Activated T-helper 2 cell treated with anti-CD3 and anti-CD28 coated beads, Interferon-gamma antibody, Interleukin-2, Interleukin-4, amounts not matched to agents 10 μg/mL and 5 μg/mL and 100 μg/mL, durations not matched to agents 14 hours and 24 hours and 36 hours (primary cell): ENCODE measurements at regions of chr12 and their contacts with region 1.

Region 1: DNA sequence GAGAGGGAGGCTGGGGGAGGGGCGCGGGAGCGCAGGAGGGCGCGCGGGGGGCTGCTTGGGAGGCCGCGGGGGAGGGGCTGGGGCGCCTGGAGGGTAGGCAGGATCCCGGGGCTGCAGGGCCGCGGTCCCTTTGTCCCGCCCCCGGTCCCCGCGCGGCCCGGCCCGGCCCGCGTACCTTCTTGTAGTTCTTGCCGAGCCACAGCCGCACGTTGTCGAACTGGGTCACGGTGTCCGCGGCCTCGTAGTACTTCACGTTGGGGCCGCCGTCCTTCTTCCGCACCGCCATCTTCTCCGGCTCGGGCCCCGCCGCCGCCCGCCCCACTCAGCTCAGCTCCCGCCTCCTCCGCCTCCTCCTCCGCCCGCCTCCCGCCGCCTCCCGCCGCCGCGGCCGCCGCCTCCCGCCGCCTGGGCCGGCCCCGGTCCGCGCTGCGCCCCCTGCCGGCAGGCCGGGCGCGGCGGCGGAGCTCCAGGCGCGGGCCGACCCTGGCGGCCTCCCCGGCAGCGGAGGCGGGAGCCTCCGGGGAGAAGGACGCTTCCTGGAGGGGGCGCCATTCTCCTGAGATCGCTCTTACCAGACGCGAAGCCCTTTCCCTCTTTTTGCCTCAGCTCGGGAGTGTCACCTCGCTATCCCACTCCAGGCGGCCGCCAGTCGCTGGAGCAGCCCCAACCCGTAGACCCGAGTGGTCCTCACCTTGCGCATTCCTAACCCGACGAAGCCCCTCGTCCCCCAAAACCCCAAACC is at the start of gene SMARCC2:
- DNase-seq: peak; percentile 81
- H3K4me3 Mint-ChIP-seq: peak within 1 kb of the TSS; percentile 98
- H3K27ac Mint-ChIP-seq: peak within 1 kb of the TSS; percentile 98
- H3K4me1 Mint-ChIP-seq: peaks cover 38% of the 10 kb centered on the region
- H3K27me3 Mint-ChIP-seq: no peaks in the 10 kb centered on the region
- total RNA-seq, gene SMARCC2: 131 and 136 TPM in 2 replicates

Region 2: GRCh38 chr12:56152318-56153033 is 36.9 kb before region 1 on chr12 and contains the start of gene MYL6B:
- intact Hi-C with region 1: loop called (anchors 2 kb)
- DNase-seq: peak; percentile 93
- H3K4me3 Mint-ChIP-seq: peak within 1 kb of the TSS; percentile 95
- H3K27ac Mint-ChIP-seq: peak within 1 kb of the TSS; percentile 98
- H3K4me1 Mint-ChIP-seq: peaks cover 43% of the 10 kb centered on the region
- H3K27me3 Mint-ChIP-seq: no peaks in the 10 kb centered on the region
- total RNA-seq, gene MYL6B: 89.7 and 94.3 TPM in 2 replicates

Region 3: GRCh38 chr12:56165369-56165768 is 24.0 kb before region 1 on chr12:
- intact Hi-C with region 1: no loop called
- DNase-seq: no peak
- H3K4me3 Mint-ChIP-seq: no peak overlapping the region
- H3K27ac Mint-ChIP-seq: no peak overlapping the region
- H3K4me1 Mint-ChIP-seq: peaks cover 18% of the 10 kb centered on the region
- H3K27me3 Mint-ChIP-seq: no peaks in the 10 kb centered on the region

Region 4: GRCh38 chr12:56206457-56207166 is 17.3 kb after region 1 on chr12:
- intact Hi-C with region 1: no loop called
- DNase-seq: no peak
- H3K4me3 Mint-ChIP-seq: no peak overlapping the region
- H3K27ac Mint-ChIP-seq: no peak overlapping the region
- H3K4me1 Mint-ChIP-seq: peaks cover 1% of the 10 kb centered on the region
- H3K27me3 Mint-ChIP-seq: no peaks in the 10 kb centered on the region

Region 5: DNA sequence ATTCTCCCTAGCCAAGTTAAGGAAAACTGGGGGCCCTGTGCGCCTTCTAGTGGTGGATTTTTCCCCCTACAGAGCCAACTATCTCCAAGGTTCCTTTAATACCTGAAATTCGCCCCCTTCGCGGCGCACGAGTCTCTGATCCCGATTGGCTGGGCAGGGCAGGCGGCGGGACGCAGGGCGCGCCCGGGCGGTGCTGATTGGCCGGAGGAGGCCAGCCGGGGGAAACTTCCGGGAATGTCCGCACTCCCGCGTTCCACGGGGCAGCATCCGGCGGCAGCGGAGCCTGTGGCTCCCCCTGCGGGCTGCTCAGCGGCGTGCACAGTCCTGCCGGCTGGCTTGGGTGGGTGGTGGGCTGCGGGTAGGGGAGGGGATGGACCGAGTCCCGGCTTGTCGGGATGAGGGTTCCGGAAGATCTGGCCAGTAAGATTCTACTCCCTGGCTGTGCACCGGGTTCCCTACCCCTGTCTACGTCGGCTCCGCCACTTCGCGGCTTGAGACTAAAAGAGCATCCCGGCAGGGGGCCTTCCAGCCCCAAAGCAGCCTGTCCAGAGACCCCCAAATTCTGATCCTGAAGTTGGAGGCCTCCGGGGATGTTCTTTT is 34.9 kb after region 1 on chr12 and contains the start of gene NABP2:
- intact Hi-C with region 1: loop called (anchors 1 kb)
- DNase-seq: peak; percentile 94
- H3K4me3 Mint-ChIP-seq: peak within 1 kb of the TSS; percentile 99
- H3K27ac Mint-ChIP-seq: peak within 1 kb of the TSS; percentile 76
- H3K4me1 Mint-ChIP-seq: peaks cover 41% of the 10 kb centered on the region
- H3K27me3 Mint-ChIP-seq: no peaks in the 10 kb centered on the region
- total RNA-seq, gene NABP2: 77.3 and 86.8 TPM in 2 replicates

Region 6: GRCh38 chr12:56266693-56267442 is 77.5 kb after region 1 on chr12 and contains the start of gene COQ10A:
- intact Hi-C with region 1: loop called (anchors 2 kb)
- DNase-seq: peak; percentile 85
- H3K4me3 Mint-ChIP-seq: peak within 1 kb of the TSS; percentile 96
- H3K27ac Mint-ChIP-seq: peak within 1 kb of the TSS; percentile 87
- H3K4me1 Mint-ChIP-seq: peaks cover 17% of the 10 kb centered on the region
- H3K27me3 Mint-ChIP-seq: no peaks in the 10 kb centered on the region
- total RNA-seq, gene COQ10A: 15.9 and 17.0 TPM in 2 replicates

Region 7: DNA sequence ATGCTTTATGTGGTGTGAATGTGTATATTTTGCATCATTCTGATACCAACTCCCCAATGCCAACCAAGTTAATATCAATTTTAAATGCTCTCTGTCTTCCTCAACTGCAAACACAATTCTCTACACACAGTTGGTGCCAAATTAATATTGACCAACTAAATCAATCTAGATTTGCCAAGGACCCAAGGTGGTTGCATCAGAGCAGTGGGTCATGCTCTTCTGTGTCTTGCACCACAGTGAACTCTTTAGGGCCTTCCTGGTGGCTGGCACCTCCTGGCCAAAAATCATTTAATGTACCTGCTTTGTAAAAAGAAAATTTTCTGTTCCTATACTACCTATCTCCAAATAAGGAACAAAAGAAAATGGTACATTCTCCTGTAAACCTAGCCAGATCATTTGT is 91.5 kb after region 1 on chr12:
- intact Hi-C with region 1: no loop called
- DNase-seq: no peak
- H3K4me3 Mint-ChIP-seq: no peak overlapping the region
- H3K27ac Mint-ChIP-seq: no peak overlapping the region
- H3K4me1 Mint-ChIP-seq: no peaks in the 10 kb centered on the region
- H3K27me3 Mint-ChIP-seq: no peaks in the 10 kb centered on the region